ENCODE measurements at regions of chr4 and their contacts with region 1.

Region 1: DNA sequence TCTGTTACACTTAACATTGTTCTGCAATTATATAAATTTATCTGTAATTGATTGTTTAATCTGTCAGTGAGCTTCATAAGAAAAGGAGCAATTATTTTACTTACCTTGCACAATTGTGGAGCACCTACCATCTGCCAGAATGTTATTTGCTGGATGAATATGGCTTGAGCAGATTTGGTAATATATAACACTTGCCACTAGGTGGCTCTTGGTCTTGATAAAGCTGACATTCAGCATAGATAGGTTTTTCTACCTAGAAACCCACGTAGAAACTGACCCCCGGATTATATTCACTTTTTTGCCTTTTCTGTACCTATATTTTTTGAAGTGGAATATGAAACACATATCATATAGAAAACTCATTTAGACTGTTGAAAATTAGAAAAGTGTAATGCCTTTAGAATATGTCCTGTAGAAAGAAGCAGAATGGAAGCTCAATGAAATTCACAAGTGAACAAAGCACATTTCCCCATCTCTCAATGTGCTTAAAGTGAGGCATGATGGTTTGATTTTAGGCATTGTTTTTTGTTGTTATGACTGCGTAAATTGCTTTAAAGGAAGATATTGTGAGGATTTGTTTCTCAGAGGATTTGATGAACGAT is 9.5 kb downstream of the RBPJ start:
- DNase-seq: no peak
- ATAC-seq: peak; percentile 79

Region 2: DNA sequence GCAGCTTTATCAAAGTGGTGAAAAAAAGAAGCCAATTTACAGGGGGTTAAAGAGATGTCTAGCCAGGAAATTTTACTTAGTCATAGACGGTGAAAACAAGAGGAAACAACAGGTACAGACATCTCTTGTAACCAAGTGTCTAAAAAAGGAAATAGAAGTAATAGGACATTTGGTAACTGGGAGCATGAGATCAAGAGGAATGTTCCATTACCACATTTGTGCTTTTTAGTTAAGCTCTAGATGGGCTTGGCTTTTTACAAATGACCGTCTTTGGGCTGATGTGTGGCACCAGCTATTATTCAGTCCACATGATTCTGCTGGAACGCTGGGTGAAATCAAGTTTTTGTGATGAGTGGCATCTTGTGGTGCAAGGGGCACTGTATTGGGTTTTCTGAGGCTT is 236.7 kb before region 1 on chr4:
- intact Hi-C with region 1: no loop called
- DNase-seq: no peak
- ATAC-seq: peak; percentile 67

Region 3: GRCh38 chr4:26206339-26206738 is 123.9 kb before region 1 on chr4:
- intact Hi-C with region 1: no loop called
- DNase-seq: peak; percentile 64
- ATAC-seq: peak; percentile 95

Region 4: GRCh38 chr4:26404743-26405206 is 74.5 kb after region 1 on chr4:
- intact Hi-C with region 1: loop called (anchors 10 kb)
- DNase-seq: no peak
- ATAC-seq: no peak

Region 5: GRCh38 chr4:27010334-27010940 is 680.1 kb after region 1 on chr4:
- intact Hi-C with region 1: loop called (anchors 10 kb)
- DNase-seq: peak; percentile 79
- ATAC-seq: peak; percentile 81